ENCODE measurements at regions of chr4 and their contacts with region 1.

Region 1: GRCh38 chr4:53076374-53076958 is 214.3 kb downstream of the RASL11B start:
- DNase-seq: peak in 3 of 5 donors; percentile 26 to 49 (median 39)
- ATAC-seq: peak; percentile 77 to 94 (median 85)
- H3K4me3 ChIP-seq: no peak overlapping the region
- H3K27ac ChIP-seq: no peak overlapping the region
- H3K4me1 ChIP-seq: peaks cover 0 to 12% (median 0%) of the 10 kb centered on the region in 12 donors
- H3K27me3 ChIP-seq: no peaks in the 10 kb centered on the region
- CTCF ChIP-seq: no peak
- POLR2A ChIP-seq: no peak

Region 2: DNA sequence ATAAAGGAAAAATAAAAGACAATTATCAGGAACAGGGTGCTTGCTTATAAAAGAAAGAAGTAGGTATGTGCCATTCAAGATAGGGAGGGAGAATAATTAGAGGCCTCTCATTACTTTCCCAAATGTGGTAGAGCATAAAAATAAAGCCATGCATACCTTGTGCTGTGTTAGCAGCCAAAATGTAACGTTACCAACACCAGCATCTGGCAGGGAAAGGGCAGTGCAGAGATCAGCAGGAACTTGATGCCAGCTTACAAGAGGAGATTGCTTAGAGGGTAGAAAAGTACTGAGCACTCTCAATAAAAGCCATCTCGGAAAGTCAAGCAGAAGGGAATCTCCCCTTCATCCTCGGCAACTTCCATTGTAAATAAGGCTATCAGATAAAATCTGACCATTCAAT is 18.8 kb before region 1 on chr4:
- intact Hi-C with region 1: loop called in 1 of 10 experiments (anchors 1 kb)
- DNase-seq: peak in 3 of 5 donors; percentile 13 to 35 (median 28)
- ATAC-seq: peak; percentile 86 to 92 (median 90)
- H3K4me3 ChIP-seq: no peak overlapping the region
- H3K27ac ChIP-seq: peak overlapping the region in 3 of 12 donors; percentile 6 to 58 (median 32)
- H3K4me1 ChIP-seq: peaks cover 0 to 20% (median 5%) of the 10 kb centered on the region in 12 donors
- H3K27me3 ChIP-seq: no peaks in the 10 kb centered on the region
- CTCF ChIP-seq: no peak
- POLR2A ChIP-seq: no peak